ENCODE measurements at regions of chr6 and their contacts with region 1.

Region 1: GRCh38 chr6:26025894-26026832 is 61.1 kb upstream of the HFE start:
- DNase-seq: peak; percentile 96
- H3K4me3 ChIP-seq: peak overlapping the region; percentile 1 to 59 (median 55)
- H3K27ac ChIP-seq: peak overlapping the region; percentile 95
- H3K4me1 ChIP-seq: peaks cover 18% of the 10 kb centered on the region
- H3K27me3 ChIP-seq: no peaks in the 10 kb centered on the region
- CTCF ChIP-seq: peak; percentile 89
- POLR2A ChIP-seq: no peak

Region 2: GRCh38 chr6:26045065-26045927 is 19.1 kb after region 1 on chr6:
- CTCF ChIA-PET with region 1: interaction called, 53 read pairs
- POLR2A ChIA-PET with region 1: interaction called, 75 read pairs
- dilution Hi-C with region 1: no loop called
- intact Hi-C with region 1: loop called (anchors 1 kb)
- DNase-seq: peak; percentile 97
- H3K4me3 ChIP-seq: peak overlapping the region; percentile 3 to 62 (median 45)
- H3K27ac ChIP-seq: peak overlapping the region; percentile 92
- H3K4me1 ChIP-seq: peaks cover 19% of the 10 kb centered on the region
- H3K27me3 ChIP-seq: no peaks in the 10 kb centered on the region
- CTCF ChIP-seq: peak in 1 of 2 donors; percentile 23
- POLR2A ChIP-seq: peak; percentile 98

Region 3: DNA sequence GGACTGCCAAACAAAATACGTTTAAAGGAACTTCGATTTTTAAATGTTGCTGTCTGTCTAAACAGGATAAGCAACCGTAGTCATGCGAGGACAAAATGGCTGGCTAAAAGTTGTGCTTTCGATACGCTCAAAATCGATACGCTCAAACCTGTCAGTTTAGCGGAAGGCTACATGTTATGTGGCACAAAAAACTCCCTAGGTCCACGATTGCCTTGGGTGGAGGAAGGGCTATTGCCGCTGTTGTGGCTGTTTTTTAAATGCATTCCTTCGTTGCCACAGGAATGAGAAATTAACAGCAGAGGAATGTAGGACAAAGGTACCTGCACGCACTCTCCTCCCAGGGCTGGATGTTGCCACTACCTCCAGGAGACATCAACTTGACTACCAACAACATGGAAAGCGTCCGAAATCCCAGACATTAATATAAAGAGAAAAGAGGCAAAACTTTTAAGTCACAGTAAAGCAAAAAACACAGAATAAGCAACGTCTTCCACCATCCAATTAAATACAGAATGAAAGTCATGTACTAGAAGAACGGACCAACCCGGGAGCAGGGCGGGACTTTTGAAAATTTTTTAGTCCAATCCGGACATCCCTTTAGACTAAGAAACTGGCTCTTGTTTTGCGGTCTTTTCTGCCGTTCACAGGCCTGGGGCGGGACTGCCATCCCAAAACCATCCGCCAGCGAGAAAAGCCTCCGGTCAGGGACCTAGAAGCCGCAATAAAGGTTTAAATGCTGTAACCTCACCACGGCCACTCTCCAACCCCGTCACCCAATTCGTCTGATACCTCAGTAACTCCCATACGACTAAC is 28.9 kb after region 1 on chr6:
- CTCF ChIA-PET with region 1: interaction called, 9 read pairs
- POLR2A ChIA-PET with region 1: interaction called, 10 read pairs
- dilution Hi-C with region 1: no loop called
- intact Hi-C with region 1: loop called (anchors 1 kb)
- DNase-seq: peak; percentile 94
- H3K4me3 ChIP-seq: peak overlapping the region; percentile 62 to 74 (median 65)
- H3K27ac ChIP-seq: peak overlapping the region; percentile 98
- H3K4me1 ChIP-seq: peaks cover 13% of the 10 kb centered on the region
- H3K27me3 ChIP-seq: no peaks in the 10 kb centered on the region
- CTCF ChIP-seq: no peak
- POLR2A ChIP-seq: peak; percentile 98

Region 4: DNA sequence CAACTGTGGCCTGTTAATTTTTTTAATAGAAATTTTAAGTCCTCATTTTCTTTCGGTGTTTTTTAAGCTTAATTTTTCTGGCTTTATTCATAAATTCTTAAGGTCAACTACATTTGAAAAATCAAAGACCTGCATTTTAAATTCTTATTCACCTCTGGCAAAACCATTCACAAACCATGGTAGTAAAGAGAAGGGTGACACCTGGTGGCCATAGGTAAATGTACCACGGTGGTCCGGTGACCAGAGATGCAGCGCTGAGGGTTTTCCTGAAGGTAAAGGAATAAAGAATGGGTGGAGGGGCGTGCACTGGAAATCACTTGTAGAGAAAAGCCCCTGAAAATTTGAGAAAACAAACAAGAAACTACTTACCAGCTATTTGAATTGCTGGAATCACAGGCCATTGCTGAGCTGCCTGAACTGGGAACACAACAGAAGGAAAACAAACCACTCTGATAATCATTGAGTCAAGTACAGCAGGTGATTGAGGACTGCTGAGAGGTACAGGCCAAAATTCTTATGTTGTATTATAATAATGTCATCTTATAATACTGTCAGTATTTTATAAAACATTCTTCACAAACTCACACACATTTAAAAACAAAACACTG is 71.2 kb after region 1 on chr6:
- CTCF ChIA-PET with region 1: interaction called, 26 read pairs
- POLR2A ChIA-PET with region 1: no interaction called
- dilution Hi-C with region 1: no loop called
- intact Hi-C with region 1: loop called (anchors 1 kb)
- DNase-seq: peak; percentile 66
- H3K4me3 ChIP-seq: no peak overlapping the region
- H3K27ac ChIP-seq: no peak overlapping the region
- H3K4me1 ChIP-seq: peaks cover under 1% of the 10 kb centered on the region
- H3K27me3 ChIP-seq: peaks cover 0 to 4% of the 10 kb centered on the region in 2 experiments
- CTCF ChIP-seq: peak; percentile 59
- POLR2A ChIP-seq: no peak

Region 5: DNA sequence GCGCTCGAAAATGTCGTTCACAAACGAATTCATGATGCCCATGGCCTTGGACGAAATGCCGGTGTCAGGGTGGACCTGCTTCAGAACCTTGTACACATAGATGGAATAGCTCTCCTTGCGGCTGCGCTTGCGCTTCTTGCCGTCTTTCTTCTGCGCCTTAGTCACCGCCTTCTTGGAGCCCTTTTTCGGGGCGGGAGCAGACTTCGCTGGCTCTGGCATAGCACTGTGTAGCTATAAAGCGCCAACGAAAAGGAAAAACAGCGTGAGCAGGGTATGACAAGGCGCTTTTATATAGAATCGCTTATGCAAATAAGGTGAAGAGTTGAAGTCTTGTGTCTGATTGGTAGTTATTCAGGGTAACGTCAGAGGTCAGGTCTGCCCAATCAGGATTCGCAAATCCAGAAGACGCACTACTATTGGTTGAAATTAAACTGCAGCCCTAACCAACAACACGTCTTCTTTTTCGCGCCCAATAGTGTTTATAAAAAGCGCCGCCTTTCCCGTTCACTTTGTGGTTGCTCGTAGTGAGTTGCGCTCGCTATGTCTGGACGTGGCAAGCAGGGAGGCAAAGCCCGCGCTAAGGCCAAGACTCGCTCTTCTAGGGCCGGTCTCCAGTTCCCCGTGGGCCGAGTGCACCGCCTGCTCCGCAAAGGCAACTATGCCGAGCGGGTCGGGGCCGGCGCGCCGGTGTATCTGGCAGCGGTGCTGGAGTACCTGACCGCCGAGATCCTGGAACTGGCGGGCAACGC is 1106.5 kb after region 1 on chr6:
- CTCF ChIA-PET with region 1: no interaction called
- POLR2A ChIA-PET with region 1: interaction called, 6 read pairs
- dilution Hi-C with region 1: no loop called
- intact Hi-C with region 1: loop called (anchors 5 kb)
- DNase-seq: peak; percentile 100
- H3K4me3 ChIP-seq: peak overlapping the region; percentile 37 to 81 (median 59)
- H3K27ac ChIP-seq: peak overlapping the region; percentile 86
- H3K4me1 ChIP-seq: peaks cover 19% of the 10 kb centered on the region
- H3K27me3 ChIP-seq: no peaks in the 10 kb centered on the region
- CTCF ChIP-seq: no peak
- POLR2A ChIP-seq: peak; percentile 76

Region 6: GRCh38 chr6:27838058-27838944 is 1812.1 kb after region 1 on chr6:
- CTCF ChIA-PET with region 1: no interaction called
- POLR2A ChIA-PET with region 1: interaction called, 10 read pairs
- dilution Hi-C with region 1: no loop called
- intact Hi-C with region 1: loop called (anchors 10 kb)
- DNase-seq: peak; percentile 100
- H3K4me3 ChIP-seq: peak overlapping the region; percentile 25 to 86 (median 59)
- H3K27ac ChIP-seq: peak overlapping the region; percentile 95
- H3K4me1 ChIP-seq: peaks cover 14% of the 10 kb centered on the region
- H3K27me3 ChIP-seq: no peaks in the 10 kb centered on the region
- CTCF ChIP-seq: no peak
- POLR2A ChIP-seq: peak; percentile 87

Region 7: GRCh38 chr6:27864906-27865849 is 1839.0 kb after region 1 on chr6:
- CTCF ChIA-PET with region 1: no interaction called
- POLR2A ChIA-PET with region 1: interaction called, 4 read pairs
- dilution Hi-C with region 1: no loop called
- intact Hi-C with region 1: loop called (anchors 5 kb)
- DNase-seq: peak; percentile 98
- H3K4me3 ChIP-seq: peak overlapping the region; percentile 60 to 71 (median 66)
- H3K27ac ChIP-seq: peak overlapping the region; percentile 82
- H3K4me1 ChIP-seq: peaks cover 10% of the 10 kb centered on the region
- H3K27me3 ChIP-seq: no peaks in the 10 kb centered on the region
- CTCF ChIP-seq: no peak
- POLR2A ChIP-seq: peak; percentile 77

Measured in endothelial cell of umbilical vein (primary cell).